ENCODE measurements at regions of chr7 and their contacts with region 1.

Region 1: DNA sequence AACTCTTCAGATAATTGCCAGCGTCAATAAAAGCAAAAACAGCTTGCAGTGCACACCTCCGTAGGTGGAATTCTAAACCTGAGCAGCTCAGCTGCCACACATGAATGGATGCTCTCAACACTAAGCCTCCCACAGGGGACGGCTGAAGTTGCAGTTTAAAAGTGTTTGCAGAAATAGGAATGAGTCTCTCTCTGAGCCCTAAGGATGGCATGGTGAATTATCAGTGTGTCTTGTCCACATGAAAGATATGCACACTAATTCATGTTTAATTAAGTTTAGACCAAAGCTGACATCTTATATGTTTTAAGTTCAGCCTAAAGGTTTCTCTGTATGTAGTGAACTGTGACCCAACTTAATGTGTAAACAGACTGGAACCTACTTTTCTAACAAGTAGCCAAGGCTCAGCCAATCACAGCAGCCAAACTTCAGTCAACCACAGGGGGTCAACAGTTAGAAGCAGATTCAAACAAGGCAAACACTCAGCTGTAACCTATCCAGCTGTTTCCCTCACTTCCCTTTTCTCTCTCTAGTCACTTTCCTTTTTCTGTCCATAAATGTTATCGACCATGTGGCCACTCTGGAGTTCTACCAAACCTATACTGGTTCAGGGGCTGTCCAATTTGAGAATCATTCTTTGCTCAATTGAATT is 38.1 kb downstream of the CTTNBP2 start:
- DNase-seq: no peak
- H3K4me3 ChIP-seq: no peak overlapping the region
- CTCF ChIP-seq: no peak
- POLR2A ChIP-seq: no peak

Region 2: GRCh38 chr7:117870448-117871130 is 35.4 kb after region 1 on chr7:
- intact Hi-C with region 1: loop called (anchors 1 kb)
- DNase-seq: no peak
- H3K4me3 ChIP-seq: no peak overlapping the region
- CTCF ChIP-seq: no peak
- POLR2A ChIP-seq: no peak